Caco-2 (cell line): ENCODE measurements at regions of chr1 and their contacts with region 1.

Region 1: DNA sequence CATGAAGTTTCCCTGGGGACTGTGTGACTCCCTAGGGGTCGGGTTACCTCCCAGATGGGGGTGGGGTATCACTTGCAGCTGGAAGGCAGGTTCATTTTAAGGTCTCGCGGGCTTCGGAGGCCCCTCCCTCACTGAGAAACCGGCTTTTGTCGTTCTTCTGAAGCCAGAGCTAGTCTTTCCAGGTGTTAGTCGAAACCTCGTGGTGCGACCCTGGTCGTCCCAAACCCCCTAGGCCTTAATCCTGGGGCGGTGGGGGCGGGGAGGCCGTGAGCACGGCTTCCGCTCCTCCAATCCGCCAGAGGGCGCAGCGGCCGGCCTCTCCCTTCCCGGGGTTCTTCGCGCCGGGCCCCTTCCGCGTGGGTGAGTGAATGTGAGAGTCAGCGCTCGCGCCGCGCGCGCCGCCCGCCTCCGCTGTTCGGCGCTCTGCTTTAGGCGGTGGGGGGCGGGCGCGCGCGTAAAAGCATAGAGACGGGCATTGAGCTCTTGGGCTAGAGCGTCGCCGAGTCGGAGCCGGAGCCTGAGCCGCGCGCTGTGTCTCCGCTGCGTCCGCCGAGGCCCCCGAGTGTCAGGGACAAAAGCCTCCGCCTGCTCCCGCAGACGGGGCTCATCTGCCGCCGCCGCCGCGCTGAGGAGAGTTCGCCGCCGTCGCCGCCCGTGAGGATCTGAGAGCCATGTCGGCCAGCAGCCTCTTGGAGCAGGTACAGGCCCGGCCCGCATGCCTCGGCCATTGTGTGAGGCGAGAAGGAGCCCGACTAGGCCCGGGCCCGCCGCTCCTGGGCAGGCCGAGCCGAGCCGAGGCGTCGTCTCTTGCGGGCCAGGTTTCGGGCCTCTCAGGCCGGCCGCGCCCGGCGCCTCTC is at the start of gene YTHDF2:
- DNase-seq: peak; percentile 93 to 95
- H3K4me3 ChIP-seq: peak within 1 kb of the TSS; percentile 62
- H3K4me3 Mint-ChIP-seq: peak within 1 kb of the TSS; percentile 92
- H3K27ac Mint-ChIP-seq: peak within 1 kb of the TSS; percentile 92
- H3K4me1 ChIP-seq: peaks cover 17% of the 10 kb centered on the region; the same call in 1 of the 2 replicates
- H3K4me1 Mint-ChIP-seq: no peaks in the 10 kb centered on the region
- H3K27me3 ChIP-seq: no peaks in the 10 kb centered on the region
- H3K27me3 Mint-ChIP-seq: no peaks in the 10 kb centered on the region
- CTCF ChIP-seq: peak; percentile 65 to 70
- total RNA-seq, gene YTHDF2: 45.8 and 51.5 TPM in 2 replicates

Region 2: DNA sequence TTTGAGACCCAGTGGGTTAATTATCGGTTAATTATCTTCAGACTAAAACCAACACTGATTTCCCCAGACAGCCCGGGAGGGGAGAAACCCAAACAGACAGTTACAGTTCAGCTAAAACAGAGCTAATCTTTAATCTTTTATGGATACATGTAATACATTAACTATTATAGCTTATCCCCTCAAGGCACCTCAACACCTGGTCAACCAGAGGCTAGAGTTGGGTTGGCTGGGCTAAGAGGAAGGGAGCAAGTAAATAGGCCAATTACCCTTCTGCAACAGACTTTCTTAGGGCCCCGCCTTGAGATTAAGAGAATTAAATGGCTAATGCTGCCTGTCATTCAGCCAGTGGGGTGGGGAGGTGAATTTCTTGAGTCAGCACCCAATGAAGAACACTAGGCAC is 414.5 kb before region 1 on chr1:
- CTCF ChIA-PET with region 1: no interaction called
- POLR2A ChIA-PET with region 1: interaction called, 12 read pairs
- intact Hi-C with region 1: no loop called
- DNase-seq: peak; percentile 68 to 87
- H3K4me3 ChIP-seq: no peak overlapping the region
- H3K4me3 Mint-ChIP-seq: no peak overlapping the region
- H3K27ac Mint-ChIP-seq: no peak overlapping the region
- H3K4me1 ChIP-seq: peaks cover 15% of the 10 kb centered on the region
- H3K4me1 Mint-ChIP-seq: peaks cover 14% of the 10 kb centered on the region
- H3K27me3 ChIP-seq: no peaks in the 10 kb centered on the region
- H3K27me3 Mint-ChIP-seq: no peaks in the 10 kb centered on the region
- CTCF ChIP-seq: no peak

Region 3: DNA sequence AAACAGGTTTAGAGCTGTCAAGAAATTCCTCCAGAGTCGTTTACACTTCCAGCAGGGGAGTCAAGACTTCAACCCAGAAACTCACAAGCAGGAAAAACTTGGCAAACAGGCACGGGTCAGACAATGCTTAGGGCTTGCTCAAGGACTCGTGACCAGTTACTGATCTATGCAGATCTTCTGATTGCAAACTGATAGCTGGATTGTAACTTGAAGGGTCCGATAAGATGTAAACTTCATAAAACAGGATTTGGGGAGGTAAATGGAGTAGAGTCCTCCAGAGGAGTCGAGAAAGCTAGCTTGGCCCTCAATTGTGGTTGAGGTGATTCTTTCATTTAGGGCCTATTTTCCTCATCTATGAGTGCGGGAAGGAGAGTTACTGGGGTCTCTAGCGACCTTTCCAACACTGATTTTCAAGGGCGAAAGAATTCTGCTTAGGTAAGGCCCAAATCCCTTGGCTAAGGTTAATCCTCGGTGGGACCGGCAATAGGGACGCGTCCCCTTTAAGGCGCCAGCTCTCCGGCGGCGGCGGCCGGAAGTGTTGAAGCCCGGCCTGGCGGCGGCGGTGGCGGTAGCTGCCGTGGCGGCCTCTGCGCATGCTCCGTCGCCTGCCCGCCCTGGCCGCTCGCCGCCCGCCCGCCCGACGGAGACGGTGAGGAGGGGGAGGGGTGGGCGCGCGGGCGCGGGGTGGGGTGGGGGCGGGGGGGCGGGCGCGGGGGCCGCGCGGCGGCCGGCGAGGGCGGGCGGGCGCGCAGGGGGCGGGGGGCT is 68.3 kb before region 1 on chr1 and contains the start of gene GMEB1:
- CTCF ChIA-PET with region 1: interaction called, 29 read pairs
- POLR2A ChIA-PET with region 1: interaction called, 32 read pairs
- intact Hi-C with region 1: loop called (anchors 1 kb)
- DNase-seq: peak; percentile 81 to 87
- H3K4me3 ChIP-seq: peak within 1 kb of the TSS; percentile 46
- H3K4me3 Mint-ChIP-seq: peak within 1 kb of the TSS; percentile 91
- H3K27ac Mint-ChIP-seq: peak within 1 kb of the TSS; percentile 97
- H3K4me1 ChIP-seq: peaks cover 9% of the 10 kb centered on the region
- H3K4me1 Mint-ChIP-seq: peaks cover 8% of the 10 kb centered on the region
- H3K27me3 ChIP-seq: no peaks in the 10 kb centered on the region
- H3K27me3 Mint-ChIP-seq: no peaks in the 10 kb centered on the region
- CTCF ChIP-seq: no peak
- total RNA-seq, gene GMEB1: 4.3 and 5.2 TPM in 2 replicates

Region 4: GRCh38 chr1:28877132-28877781 is 140.6 kb after region 1 on chr1:
- CTCF ChIA-PET with region 1: interaction called, 11 read pairs
- POLR2A ChIA-PET with region 1: no interaction called
- intact Hi-C with region 1: no loop called
- DNase-seq: peak; percentile 63 to 80
- H3K4me3 ChIP-seq: no peak overlapping the region
- H3K4me3 Mint-ChIP-seq: no peak overlapping the region
- H3K27ac Mint-ChIP-seq: no peak overlapping the region
- H3K4me1 ChIP-seq: peaks cover 6% of the 10 kb centered on the region
- H3K4me1 Mint-ChIP-seq: peaks cover 11% of the 10 kb centered on the region
- H3K27me3 ChIP-seq: no peaks in the 10 kb centered on the region
- H3K27me3 Mint-ChIP-seq: no peaks in the 10 kb centered on the region
- CTCF ChIP-seq: peak; percentile 52 to 73

Region 5: GRCh38 chr1:28956038-28956464 is 219.4 kb after region 1 on chr1:
- CTCF ChIA-PET with region 1: no interaction called
- POLR2A ChIA-PET with region 1: no interaction called
- intact Hi-C with region 1: no loop called
- DNase-seq: no peak
- H3K4me3 ChIP-seq: no peak overlapping the region
- H3K4me3 Mint-ChIP-seq: no peak overlapping the region
- H3K27ac Mint-ChIP-seq: no peak overlapping the region
- H3K4me1 ChIP-seq: no peaks in the 10 kb centered on the region
- H3K4me1 Mint-ChIP-seq: no peaks in the 10 kb centered on the region
- H3K27me3 ChIP-seq: no peaks in the 10 kb centered on the region
- H3K27me3 Mint-ChIP-seq: no peaks in the 10 kb centered on the region
- CTCF ChIP-seq: no peak

Region 6: DNA sequence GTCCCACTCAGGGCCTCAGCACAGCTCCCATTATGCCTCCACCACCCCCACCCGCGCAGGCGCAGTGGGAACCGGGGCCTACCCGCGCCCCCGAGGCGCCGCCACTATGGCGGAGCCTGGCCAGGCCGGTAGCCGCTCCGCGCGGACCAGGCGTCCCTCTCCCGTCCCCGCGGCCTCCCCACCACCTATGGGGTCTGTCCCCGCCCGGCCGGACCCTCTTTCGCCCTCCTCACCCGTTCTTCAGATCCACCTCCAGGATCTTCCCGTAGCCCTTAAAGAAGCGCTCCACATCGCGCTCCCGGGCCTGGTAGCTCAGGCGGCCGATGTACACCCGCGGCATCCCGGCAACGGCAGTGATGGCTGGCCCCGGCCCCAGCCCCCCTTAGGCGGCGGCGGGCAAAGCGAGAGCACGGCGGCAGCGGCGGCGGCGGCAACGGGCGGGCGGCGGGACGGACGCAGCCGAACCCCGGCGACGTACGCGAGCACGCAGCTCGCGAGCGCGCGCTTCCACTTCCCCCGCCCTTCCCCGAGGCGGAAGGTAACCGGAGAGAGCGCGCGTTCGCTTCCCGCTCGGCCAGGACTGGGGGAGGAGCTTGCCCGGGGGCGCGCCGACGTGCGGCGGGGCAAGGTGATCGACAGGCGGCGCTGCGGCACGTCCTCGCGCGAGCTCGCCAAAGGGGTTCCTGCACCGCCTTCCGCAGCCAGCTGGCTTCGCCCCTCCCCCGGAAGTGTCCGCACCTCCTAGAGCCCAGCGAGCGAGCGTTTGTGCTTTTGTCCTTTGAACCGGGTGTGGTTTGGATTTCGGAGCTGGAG is 444.9 kb after region 1 on chr1 and contains the start of gene SRSF4:
- CTCF ChIA-PET with region 1: no interaction called
- POLR2A ChIA-PET with region 1: interaction called, 4 read pairs
- intact Hi-C with region 1: loop called (anchors 5 kb)
- DNase-seq: peak; percentile 97
- H3K4me3 ChIP-seq: peak within 1 kb of the TSS; percentile 88
- H3K4me3 Mint-ChIP-seq: peak within 1 kb of the TSS; percentile 74
- H3K27ac Mint-ChIP-seq: peak within 1 kb of the TSS; percentile 60
- H3K4me1 ChIP-seq: peaks cover 21% of the 10 kb centered on the region
- H3K4me1 Mint-ChIP-seq: peaks cover 20% of the 10 kb centered on the region
- H3K27me3 ChIP-seq: no peaks in the 10 kb centered on the region
- H3K27me3 Mint-ChIP-seq: no peaks in the 10 kb centered on the region
- CTCF ChIP-seq: peak; percentile 45 to 56
- total RNA-seq, gene SRSF4: 44.1 and 45.8 TPM in 2 replicates